MCF 10A (cell line): ENCODE measurements at regions of chr15 and their contacts with region 1.

Region 1: DNA sequence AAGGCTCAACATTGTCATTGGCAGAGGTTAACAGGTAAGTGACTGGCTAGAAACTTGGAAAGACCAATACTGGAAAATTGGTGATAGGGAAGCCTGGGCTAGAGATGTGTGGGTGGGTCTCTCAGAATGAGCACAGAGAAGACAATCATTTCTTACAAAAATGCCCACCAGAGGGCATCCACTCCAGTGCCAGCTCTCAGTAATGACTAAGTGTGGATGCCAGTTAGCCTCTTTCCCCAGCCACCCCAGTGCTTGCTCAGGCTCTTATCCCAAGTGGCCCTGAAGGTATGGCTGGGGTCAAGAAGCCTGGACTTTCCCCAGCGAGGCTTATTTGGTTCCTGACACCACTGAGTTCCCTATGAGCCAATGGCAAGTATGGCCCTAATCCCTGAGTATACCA is 115.9 kb upstream of the ST8SIA2 start:
- DNase-seq: peak; percentile 53
- H3K4me3 Mint-ChIP-seq: no peak overlapping the region
- H3K27ac Mint-ChIP-seq: no peak overlapping the region
- H3K4me1 Mint-ChIP-seq: no peaks in the 10 kb centered on the region
- H3K27me3 Mint-ChIP-seq: peaks cover 29% of the 10 kb centered on the region
- CTCF ChIP-seq: peak; percentile 32

Region 2: GRCh38 chr15:92069308-92070250 is 208.2 kb before region 1 on chr15:
- CTCF ChIA-PET with region 1: no interaction called
- POLR2A ChIA-PET with region 1: no interaction called
- intact Hi-C with region 1: no loop called
- DNase-seq: peak; percentile 87
- H3K4me3 Mint-ChIP-seq: peak overlapping the region; percentile 67
- H3K27ac Mint-ChIP-seq: peak overlapping the region; percentile 75
- H3K4me1 Mint-ChIP-seq: peaks cover 8% of the 10 kb centered on the region
- H3K27me3 Mint-ChIP-seq: no peaks in the 10 kb centered on the region
- CTCF ChIP-seq: no peak

Region 3: DNA sequence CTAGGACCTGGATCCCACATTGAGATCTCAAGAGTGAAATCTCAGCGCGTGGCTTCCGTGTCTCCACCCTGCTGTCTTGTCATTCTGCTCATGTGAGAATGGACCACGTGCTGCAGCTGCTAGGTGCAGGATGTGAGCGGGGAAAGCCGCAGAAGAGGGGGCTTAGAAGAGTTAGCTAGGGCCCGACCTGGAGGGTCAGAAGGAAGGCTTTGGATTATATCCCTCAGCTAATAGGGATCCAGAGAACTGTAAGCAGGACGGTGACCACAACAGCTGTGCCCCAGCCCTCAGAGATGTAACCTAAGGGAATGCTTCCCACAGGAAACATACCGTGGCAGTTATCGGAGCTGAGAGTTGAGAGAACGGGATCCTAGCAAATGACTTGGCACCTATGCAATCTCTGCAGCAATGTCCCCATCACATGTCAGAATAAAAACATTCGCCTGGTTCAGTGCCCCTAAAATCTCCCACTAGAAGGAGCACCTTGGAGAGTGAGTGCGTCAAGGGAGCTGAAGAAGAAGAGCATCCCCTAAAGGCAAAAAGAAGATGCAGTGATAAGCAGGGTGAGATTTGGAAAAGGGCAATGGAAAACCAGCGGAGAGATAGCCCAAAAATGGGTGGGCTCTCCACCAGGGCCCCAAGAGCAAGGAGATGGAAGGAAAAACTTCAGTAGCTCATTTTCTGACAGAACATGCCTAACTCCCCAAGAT is 39.0 kb after region 1 on chr15:
- CTCF ChIA-PET with region 1: no interaction called
- POLR2A ChIA-PET with region 1: no interaction called
- intact Hi-C with region 1: no loop called
- DNase-seq: no peak
- H3K4me3 Mint-ChIP-seq: no peak overlapping the region
- H3K27ac Mint-ChIP-seq: no peak overlapping the region
- H3K4me1 Mint-ChIP-seq: no peaks in the 10 kb centered on the region
- H3K27me3 Mint-ChIP-seq: peaks cover 70% of the 10 kb centered on the region
- CTCF ChIP-seq: no peak

Region 4: DNA sequence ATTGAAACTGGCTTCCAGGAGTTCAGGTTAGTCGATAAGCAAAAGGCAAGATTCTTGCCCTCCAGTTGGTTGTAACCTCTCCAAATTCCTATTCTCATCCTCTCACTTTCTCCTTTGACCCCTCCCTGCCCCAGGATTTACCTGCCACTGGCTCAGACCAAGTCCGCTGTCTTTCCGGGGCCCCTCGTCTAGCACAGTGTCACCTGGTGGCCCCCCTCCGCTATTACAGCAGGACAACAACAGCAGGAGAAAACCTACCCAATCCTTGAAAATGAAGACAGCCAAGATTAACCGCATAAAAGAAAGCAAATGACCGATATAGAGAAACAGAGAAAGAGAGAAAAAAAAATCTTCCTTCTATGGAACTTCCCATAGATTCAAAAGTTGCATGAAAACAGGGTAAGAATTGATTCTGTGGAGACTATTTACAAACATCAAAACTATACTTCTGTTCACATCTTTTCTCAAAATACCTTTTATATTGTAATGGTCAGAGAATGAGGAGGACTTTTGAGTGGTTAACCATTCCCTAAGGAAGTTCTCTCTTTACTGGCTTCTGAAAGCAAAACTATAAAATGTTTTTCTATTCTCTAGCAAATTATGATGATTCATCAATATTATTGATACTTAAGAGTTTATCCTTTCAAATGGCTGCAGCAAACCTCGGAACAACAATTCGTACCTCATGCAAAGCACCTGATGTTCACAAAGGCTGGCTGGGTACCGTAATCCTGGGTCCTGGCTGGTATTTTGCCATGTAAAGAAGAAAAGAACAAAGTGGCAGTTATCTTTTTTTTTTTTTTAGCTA is 105.9 kb after region 1 on chr15:
- CTCF ChIA-PET with region 1: interaction called, 3 read pairs
- POLR2A ChIA-PET with region 1: no interaction called
- intact Hi-C with region 1: loop called (anchors 2 kb)
- DNase-seq: peak; percentile 42
- H3K4me3 Mint-ChIP-seq: no peak overlapping the region
- H3K27ac Mint-ChIP-seq: no peak overlapping the region
- H3K4me1 Mint-ChIP-seq: peaks cover 19% of the 10 kb centered on the region
- H3K27me3 Mint-ChIP-seq: peaks cover 46% of the 10 kb centered on the region
- CTCF ChIP-seq: peak; percentile 55

Region 5: DNA sequence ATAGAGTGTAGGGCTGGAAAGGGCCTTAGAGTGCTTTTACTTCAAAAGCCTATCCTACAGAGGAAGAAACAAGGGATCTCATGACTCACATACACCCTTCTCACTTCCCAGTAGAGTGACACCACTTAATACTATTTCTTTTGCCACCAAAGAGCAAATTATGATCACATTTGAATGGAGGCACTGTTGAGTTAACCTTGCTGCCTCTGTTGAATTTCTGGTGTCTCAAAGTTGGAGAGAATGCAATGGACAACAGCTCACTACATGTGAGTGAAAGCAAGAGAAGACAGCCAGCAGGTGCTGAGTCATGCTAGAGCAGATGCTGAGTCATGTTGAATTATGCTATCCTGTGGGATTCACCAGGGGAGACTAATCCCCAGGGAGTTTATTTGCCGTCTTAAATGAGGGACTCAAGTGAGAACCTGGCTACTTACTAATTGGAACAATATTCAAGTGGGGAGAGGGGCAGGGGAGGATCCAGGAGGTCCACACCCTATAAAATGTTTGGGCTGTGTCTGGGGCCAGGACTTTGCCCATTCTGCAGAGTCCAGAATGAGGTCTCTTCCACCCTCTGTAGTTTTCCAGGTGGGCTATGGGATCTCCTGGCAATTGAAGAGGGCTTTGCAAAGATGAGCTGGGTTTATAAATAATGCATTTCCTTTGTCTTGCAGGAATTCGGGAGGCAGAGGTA is 151.7 kb after region 1 on chr15:
- CTCF ChIA-PET with region 1: interaction called, 5 read pairs
- POLR2A ChIA-PET with region 1: no interaction called
- intact Hi-C with region 1: loop called (anchors 1 kb)
- DNase-seq: peak; percentile 71
- H3K4me3 Mint-ChIP-seq: no peak overlapping the region
- H3K27ac Mint-ChIP-seq: no peak overlapping the region
- H3K4me1 Mint-ChIP-seq: peaks cover 6% of the 10 kb centered on the region
- H3K27me3 Mint-ChIP-seq: peaks cover 54% of the 10 kb centered on the region
- CTCF ChIP-seq: no peak

Region 6: GRCh38 chr15:92463826-92464225 is 186.1 kb after region 1 on chr15:
- CTCF ChIA-PET with region 1: no interaction called
- POLR2A ChIA-PET with region 1: no interaction called
- intact Hi-C with region 1: loop called (anchors 10 kb)
- DNase-seq: no peak
- H3K4me3 Mint-ChIP-seq: no peak overlapping the region
- H3K27ac Mint-ChIP-seq: no peak overlapping the region
- H3K4me1 Mint-ChIP-seq: no peaks in the 10 kb centered on the region
- H3K27me3 Mint-ChIP-seq: peaks cover 37% of the 10 kb centered on the region
- CTCF ChIP-seq: no peak

Region 7: DNA sequence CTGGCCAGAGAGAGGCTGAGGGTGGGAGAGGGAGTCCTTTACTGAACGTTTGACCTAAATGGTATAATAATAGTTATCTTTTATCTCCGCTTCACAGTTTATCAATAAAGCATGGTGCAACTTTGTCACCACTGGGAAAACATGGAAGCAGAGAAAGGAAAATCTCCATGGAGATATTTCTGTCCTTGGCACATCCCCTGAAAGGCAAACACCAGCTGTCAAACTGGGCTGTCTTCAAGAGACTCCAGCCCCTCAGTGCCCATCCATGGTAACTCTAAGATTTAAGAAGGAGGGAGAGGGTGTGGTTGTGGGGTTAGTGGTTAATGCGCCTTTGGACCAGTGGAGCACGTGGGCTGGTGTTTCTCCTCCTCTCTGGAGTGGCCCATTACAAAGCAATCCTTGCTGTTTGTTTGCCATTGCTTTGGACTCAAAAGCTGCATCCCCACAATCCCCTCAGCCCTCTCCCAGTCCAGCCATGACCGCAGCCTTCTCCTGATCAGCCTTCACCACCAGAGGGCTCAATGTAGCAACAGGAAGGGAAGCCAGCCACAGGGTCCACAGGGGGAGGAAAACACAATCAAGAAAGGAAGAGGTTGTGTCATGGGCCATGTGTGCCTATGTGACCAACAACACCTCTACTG is 416.0 kb after region 1 on chr15:
- CTCF ChIA-PET with region 1: no interaction called
- POLR2A ChIA-PET with region 1: no interaction called
- intact Hi-C with region 1: no loop called
- DNase-seq: peak; percentile 25
- H3K4me3 Mint-ChIP-seq: no peak overlapping the region
- H3K27ac Mint-ChIP-seq: no peak overlapping the region
- H3K4me1 Mint-ChIP-seq: peaks cover 6% of the 10 kb centered on the region
- H3K27me3 Mint-ChIP-seq: peaks cover 29% of the 10 kb centered on the region
- CTCF ChIP-seq: no peak